AG04449 (cell line): ENCODE measurements at regions of chr1 and their contacts with region 1.

Region 1: DNA sequence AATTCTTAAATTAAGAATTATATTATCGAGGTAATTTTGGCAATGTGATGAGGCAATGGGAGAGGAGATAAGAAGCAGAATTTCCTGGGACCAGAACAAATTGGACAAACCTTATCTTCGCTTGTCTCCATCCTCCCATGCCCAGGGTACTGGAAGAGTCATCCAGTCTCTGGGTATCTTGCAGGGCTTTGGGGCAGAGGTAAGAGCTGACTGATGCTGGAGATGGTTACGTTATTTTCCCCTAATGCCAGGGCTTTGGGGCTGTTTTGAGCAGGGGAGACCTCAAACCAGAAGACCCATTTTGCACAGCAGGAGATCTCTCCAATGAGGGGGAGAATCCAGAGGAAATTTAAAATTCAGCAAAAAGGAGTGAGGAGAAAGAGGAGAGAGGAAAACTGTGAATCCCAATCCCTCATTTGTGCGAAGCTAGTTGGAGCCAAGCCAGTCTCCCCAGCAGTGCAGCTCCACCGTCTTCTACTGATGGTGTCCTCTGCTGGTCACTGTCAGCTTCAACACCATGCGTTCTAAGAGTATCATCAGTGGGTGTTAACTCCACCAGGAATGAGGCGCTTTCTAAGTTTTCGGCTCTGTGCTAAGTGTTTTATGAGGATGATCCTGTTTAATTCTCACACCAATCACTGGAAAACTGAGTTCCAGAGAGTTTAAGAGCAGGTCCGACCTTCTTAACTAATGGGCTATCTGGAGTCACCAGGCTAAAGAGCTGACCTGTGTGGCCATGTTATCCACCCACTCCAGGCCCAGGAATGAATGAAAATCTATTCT is 86.8 kb upstream of the CD34 start:
- DNase-seq: no peak
- H3K4me3 ChIP-seq: no peak overlapping the region
- CTCF ChIP-seq: peak; percentile 90

Region 2: GRCh38 chr1:207828485-207829158 is 169.1 kb before region 1 on chr1:
- CTCF ChIA-PET with region 1: interaction called, 11 read pairs
- POLR2A ChIA-PET with region 1: no interaction called
- DNase-seq: no peak
- H3K4me3 ChIP-seq: no peak overlapping the region
- CTCF ChIP-seq: peak; percentile 77

Region 3: GRCh38 chr1:207987164-207987563 is 10.5 kb before region 1 on chr1:
- CTCF ChIA-PET with region 1: interaction called, 12 read pairs
- POLR2A ChIA-PET with region 1: no interaction called
- DNase-seq: no peak
- H3K4me3 ChIP-seq: no peak overlapping the region
- CTCF ChIP-seq: no peak

Region 4: DNA sequence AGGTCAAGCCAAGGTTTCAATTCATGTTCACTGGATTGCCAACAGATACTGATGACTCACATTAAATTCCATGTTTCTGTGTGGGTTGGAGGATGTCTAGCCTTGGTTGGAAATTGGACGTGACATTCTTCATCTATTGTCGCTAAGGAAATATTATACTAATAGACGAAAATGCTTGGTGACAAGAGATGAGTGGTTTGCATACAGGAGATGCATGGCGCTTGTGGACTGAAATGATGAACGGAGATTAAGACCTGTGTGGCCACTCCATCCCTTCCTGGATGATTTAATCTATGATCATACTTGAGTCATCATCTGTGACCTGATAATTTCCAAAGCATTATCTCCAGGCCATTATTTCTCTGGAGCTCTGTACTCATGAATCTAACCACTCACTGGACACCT is 10.3 kb after region 1 on chr1:
- CTCF ChIA-PET with region 1: interaction called, 23 read pairs
- POLR2A ChIA-PET with region 1: no interaction called
- DNase-seq: no peak
- H3K4me3 ChIP-seq: no peak overlapping the region
- CTCF ChIP-seq: no peak

Region 5: GRCh38 chr1:208013210-208013609 is 15.5 kb after region 1 on chr1:
- CTCF ChIA-PET with region 1: interaction called, 23 read pairs
- POLR2A ChIA-PET with region 1: no interaction called
- DNase-seq: no peak
- H3K4me3 ChIP-seq: no peak overlapping the region
- CTCF ChIP-seq: no peak

Region 6: GRCh38 chr1:208029381-208030287 is 32.0 kb after region 1 on chr1:
- CTCF ChIA-PET with region 1: interaction called, 11 read pairs
- POLR2A ChIA-PET with region 1: no interaction called
- DNase-seq: no peak
- H3K4me3 ChIP-seq: no peak overlapping the region
- CTCF ChIP-seq: no peak